HEK293 (cell line): ENCODE measurements at regions of chr2 and their contacts with region 1.

Region 1: GRCh38 chr2:102806250-102806837 is 44.5 kb downstream of the TMEM182 start:
- H3K4me3 ChIP-seq: no peak overlapping the region
- H3K27ac ChIP-seq: no peak overlapping the region
- H3K4me1 ChIP-seq: no peaks in the 10 kb centered on the region
- CTCF ChIP-seq: peak; percentile 61; the same call in 1 of the 2 replicates

Region 2: GRCh38 chr2:102773149-102773705 is 33.1 kb before region 1 on chr2:
- CTCF ChIA-PET with region 1: interaction called, 12 read pairs
- POLR2A ChIA-PET with region 1: no interaction called
- H3K4me3 ChIP-seq: no peak overlapping the region
- H3K27ac ChIP-seq: no peak overlapping the region
- H3K4me1 ChIP-seq: no peaks in the 10 kb centered on the region
- CTCF ChIP-seq: no peak

Region 3: GRCh38 chr2:102796337-102796736 is 10.0 kb before region 1 on chr2:
- CTCF ChIA-PET with region 1: interaction called, 11 read pairs
- POLR2A ChIA-PET with region 1: no interaction called
- H3K4me3 ChIP-seq: no peak overlapping the region
- H3K27ac ChIP-seq: no peak overlapping the region
- H3K4me1 ChIP-seq: peaks cover 4% of the 10 kb centered on the region; the same call in 1 of the 2 replicates
- CTCF ChIP-seq: no peak